Caco-2 (cell line): ENCODE measurements at regions of chr7 and their contacts with region 1.

Region 1: GRCh38 chr7:80918909-80919662 is at the start of gene SEMA3C:
- DNase-seq: peak; percentile 92 to 96
- H3K4me3 ChIP-seq: peak within 1 kb of the TSS; percentile 80
- H3K4me3 Mint-ChIP-seq: peak within 1 kb of the TSS; percentile 83
- H3K27ac Mint-ChIP-seq: peak within 1 kb of the TSS; percentile 89
- H3K4me1 ChIP-seq: peaks cover 26% of the 10 kb centered on the region
- H3K4me1 Mint-ChIP-seq: peaks cover 14% of the 10 kb centered on the region
- H3K27me3 ChIP-seq: no peaks in the 10 kb centered on the region
- H3K27me3 Mint-ChIP-seq: no peaks in the 10 kb centered on the region
- CTCF ChIP-seq: no peak
- total RNA-seq, gene SEMA3C: 25.8 and 32.1 TPM in 2 replicates

Region 2: GRCh38 chr7:80722616-80723141 is 196.4 kb before region 1 on chr7:
- CTCF ChIA-PET with region 1: interaction called, 5 read pairs
- POLR2A ChIA-PET with region 1: interaction called, 8 read pairs
- intact Hi-C with region 1: loop called (anchors 1 kb)
- DNase-seq: peak; percentile 63 to 84
- H3K4me3 ChIP-seq: no peak overlapping the region
- H3K4me3 Mint-ChIP-seq: peak overlapping the region; percentile 18
- H3K27ac Mint-ChIP-seq: peak overlapping the region; percentile 70
- H3K4me1 ChIP-seq: peaks cover 57% of the 10 kb centered on the region
- H3K4me1 Mint-ChIP-seq: peaks cover 49% of the 10 kb centered on the region
- H3K27me3 ChIP-seq: no peaks in the 10 kb centered on the region
- H3K27me3 Mint-ChIP-seq: no peaks in the 10 kb centered on the region
- CTCF ChIP-seq: no peak

Region 3: DNA sequence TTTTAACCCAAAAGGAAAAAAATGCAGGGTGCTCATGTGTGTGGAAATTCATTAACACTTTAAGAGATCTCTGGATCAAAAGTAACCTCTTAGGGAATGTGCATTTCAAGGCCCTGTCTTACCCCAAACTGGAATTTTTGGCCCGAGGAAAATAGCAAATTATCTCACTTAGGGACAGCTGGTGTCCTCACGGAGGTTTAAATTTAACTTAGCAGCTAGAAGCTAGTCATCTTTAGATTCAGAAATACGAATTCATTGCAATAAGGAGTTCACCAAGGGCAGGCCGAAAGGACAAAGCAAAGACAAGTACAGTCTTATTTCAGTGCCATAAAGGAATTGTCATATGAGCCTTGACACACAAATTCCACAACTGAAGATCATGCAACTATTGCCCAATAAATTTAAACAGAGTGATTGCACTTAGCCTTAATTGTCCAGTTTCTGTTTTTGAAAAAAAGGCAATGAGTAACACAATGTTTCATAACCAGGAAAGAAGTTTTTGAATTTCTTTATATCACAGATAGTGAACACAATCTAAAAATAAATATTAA is 22.2 kb after region 1 on chr7:
- CTCF ChIA-PET with region 1: interaction called, 5 read pairs
- POLR2A ChIA-PET with region 1: interaction called, 14 read pairs
- intact Hi-C with region 1: loop called (anchors 1 kb)
- DNase-seq: peak in 1 of 2 experiments; percentile 21
- H3K4me3 ChIP-seq: no peak overlapping the region
- H3K4me3 Mint-ChIP-seq: no peak overlapping the region
- H3K27ac Mint-ChIP-seq: peak overlapping the region; percentile 68
- H3K4me1 ChIP-seq: peaks cover 32% of the 10 kb centered on the region
- H3K4me1 Mint-ChIP-seq: peaks cover 34% of the 10 kb centered on the region
- H3K27me3 ChIP-seq: no peaks in the 10 kb centered on the region
- H3K27me3 Mint-ChIP-seq: no peaks in the 10 kb centered on the region
- CTCF ChIP-seq: no peak

Region 4: GRCh38 chr7:80954191-80954590 is 35.1 kb after region 1 on chr7:
- CTCF ChIA-PET with region 1: no interaction called
- POLR2A ChIA-PET with region 1: no interaction called
- intact Hi-C with region 1: no loop called
- DNase-seq: no peak
- H3K4me3 ChIP-seq: no peak overlapping the region
- H3K4me3 Mint-ChIP-seq: no peak overlapping the region
- H3K27ac Mint-ChIP-seq: no peak overlapping the region
- H3K4me1 ChIP-seq: no peaks in the 10 kb centered on the region
- H3K4me1 Mint-ChIP-seq: no peaks in the 10 kb centered on the region
- H3K27me3 ChIP-seq: no peaks in the 10 kb centered on the region
- H3K27me3 Mint-ChIP-seq: no peaks in the 10 kb centered on the region
- CTCF ChIP-seq: no peak

Region 5: DNA sequence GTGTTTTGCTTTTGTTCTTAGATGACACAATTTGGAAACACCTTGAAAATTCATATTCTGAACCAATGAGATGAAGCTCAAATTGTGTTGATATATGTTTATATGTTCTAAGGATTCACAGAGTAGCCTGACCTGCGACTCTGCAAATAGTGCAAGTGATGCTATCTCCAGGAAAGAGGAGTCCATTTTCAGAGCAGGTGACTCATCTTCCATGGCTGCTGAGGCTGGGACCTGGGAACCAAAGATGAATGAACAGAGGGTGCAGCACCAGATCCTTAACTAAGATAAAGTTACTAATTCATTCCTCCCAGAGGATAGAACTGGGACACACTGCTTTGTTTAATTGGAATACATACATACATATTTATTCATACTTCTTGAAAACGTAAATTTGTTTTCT is 240.3 kb after region 1 on chr7:
- CTCF ChIA-PET with region 1: interaction called, 4 read pairs
- POLR2A ChIA-PET with region 1: interaction called, 3 read pairs
- intact Hi-C with region 1: loop called (anchors 1 kb)
- DNase-seq: no peak
- H3K4me3 ChIP-seq: no peak overlapping the region
- H3K4me3 Mint-ChIP-seq: no peak overlapping the region
- H3K27ac Mint-ChIP-seq: no peak overlapping the region
- H3K4me1 ChIP-seq: peaks cover 42% of the 10 kb centered on the region
- H3K4me1 Mint-ChIP-seq: peaks cover 50% of the 10 kb centered on the region
- H3K27me3 ChIP-seq: no peaks in the 10 kb centered on the region
- H3K27me3 Mint-ChIP-seq: no peaks in the 10 kb centered on the region
- CTCF ChIP-seq: no peak

Region 6: DNA sequence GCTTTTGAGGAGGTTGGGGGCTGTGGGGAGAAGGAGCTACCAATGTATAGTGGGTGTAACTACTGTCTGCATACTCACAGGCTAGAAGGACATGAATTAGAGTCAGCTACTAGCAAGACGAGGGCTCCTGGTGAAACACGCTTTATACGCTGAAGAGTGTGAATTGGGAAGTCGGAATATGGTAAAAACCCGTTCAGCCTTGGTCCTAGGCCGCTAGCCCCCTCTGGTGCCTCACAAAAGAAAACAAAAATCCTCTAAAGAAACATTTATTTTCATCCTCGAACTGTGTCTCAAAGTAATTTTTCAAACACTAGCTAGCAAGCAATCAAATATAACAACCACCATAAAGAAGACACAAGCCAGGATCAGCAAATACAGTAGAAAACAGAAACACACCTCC is 337.9 kb after region 1 on chr7:
- CTCF ChIA-PET with region 1: no interaction called
- POLR2A ChIA-PET with region 1: no interaction called
- intact Hi-C with region 1: loop called (anchors 1 kb)
- DNase-seq: peak in 1 of 2 experiments; percentile 13
- H3K4me3 ChIP-seq: no peak overlapping the region
- H3K4me3 Mint-ChIP-seq: no peak overlapping the region
- H3K27ac Mint-ChIP-seq: no peak overlapping the region
- H3K4me1 ChIP-seq: peaks cover 9% of the 10 kb centered on the region; the same call in 1 of the 2 replicates
- H3K4me1 Mint-ChIP-seq: peaks cover 9% of the 10 kb centered on the region
- H3K27me3 ChIP-seq: no peaks in the 10 kb centered on the region
- H3K27me3 Mint-ChIP-seq: no peaks in the 10 kb centered on the region
- CTCF ChIP-seq: peak in 1 of 2 experiments; percentile 17

Region 7: DNA sequence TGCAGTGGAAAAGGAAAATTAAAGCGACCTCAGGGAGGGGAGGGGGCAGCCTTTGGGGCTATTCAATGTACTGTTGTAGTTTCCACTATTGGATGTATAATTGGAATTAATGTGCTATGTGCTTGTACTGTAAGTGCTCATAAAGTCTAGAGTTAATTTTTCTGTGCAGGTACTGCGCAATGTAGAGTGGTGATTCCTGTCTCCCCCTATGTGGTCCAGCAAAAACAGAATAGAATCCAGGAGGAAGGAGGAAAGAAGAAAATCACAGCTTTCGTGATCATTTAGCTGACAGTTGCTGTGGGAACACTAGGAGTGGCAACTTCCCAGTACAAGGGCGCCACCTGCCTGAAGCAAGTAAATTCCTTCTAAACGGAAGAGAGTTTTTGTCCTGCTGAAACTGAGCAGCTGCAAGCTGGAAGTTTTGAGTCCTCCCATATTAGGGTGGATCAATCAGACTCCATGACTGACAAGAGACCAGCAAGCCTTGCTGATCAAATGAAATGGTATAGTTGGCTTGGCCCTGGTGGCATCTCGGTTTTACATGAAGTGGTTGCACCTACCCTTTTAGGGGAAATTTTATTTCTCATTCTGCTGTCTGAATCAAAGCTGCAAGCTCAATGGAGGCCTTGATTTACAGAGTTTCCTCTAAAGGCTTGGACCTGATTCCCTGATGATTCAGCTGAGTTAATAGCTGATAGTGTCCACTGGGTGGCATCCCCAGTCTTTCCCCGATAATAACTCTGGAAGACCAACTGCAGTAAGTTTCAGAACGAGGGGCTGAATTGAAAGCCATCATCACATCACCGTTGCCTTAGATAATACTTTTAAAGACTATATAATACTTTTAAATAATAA is 551.0 kb after region 1 on chr7:
- CTCF ChIA-PET with region 1: interaction called, 12 read pairs
- POLR2A ChIA-PET with region 1: no interaction called
- intact Hi-C with region 1: loop called (anchors 1 kb)
- DNase-seq: peak; percentile 77
- H3K4me3 ChIP-seq: no peak overlapping the region
- H3K4me3 Mint-ChIP-seq: no peak overlapping the region
- H3K27ac Mint-ChIP-seq: no peak overlapping the region
- H3K4me1 ChIP-seq: peaks cover 11% of the 10 kb centered on the region
- H3K4me1 Mint-ChIP-seq: peaks cover 26% of the 10 kb centered on the region
- H3K27me3 ChIP-seq: no peaks in the 10 kb centered on the region
- H3K27me3 Mint-ChIP-seq: no peaks in the 10 kb centered on the region
- CTCF ChIP-seq: peak; percentile 77 to 79